ENCODE measurements at regions of chr9 and their contacts with region 1.

Region 1: GRCh38 chr9:136488247-136489214 is 5.7 kb upstream of the SEC16A start:
- DNase-seq: peak; percentile 50 to 87
- H3K4me3 ChIP-seq: no peak overlapping the region
- H3K27ac ChIP-seq: no peak overlapping the region
- H3K4me1 ChIP-seq: peaks cover 7% of the 10 kb centered on the region
- H3K27me3 ChIP-seq: no peaks in the 10 kb centered on the region
- CTCF ChIP-seq: peak; percentile 98

Region 2: DNA sequence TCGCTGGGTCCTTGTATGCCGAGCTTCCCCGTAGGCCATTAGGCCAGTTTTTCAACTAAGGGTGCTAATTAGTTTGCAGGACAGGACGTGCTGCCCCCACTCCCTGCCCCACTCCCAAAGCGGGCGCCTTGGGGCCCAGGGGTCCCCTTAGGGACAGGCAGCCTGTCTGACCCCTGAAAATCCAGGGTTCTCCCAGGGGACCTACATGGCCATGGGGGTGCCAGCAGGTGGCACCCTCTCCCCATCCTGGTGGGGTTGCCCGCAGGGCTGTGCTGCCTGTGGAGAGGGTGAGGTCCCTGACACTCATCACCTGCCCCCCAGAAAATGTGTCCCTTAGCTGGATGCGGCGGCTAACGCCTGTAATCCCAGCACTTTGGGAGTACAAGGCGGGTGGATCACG is 176.1 kb before region 1 on chr9:
- CTCF ChIA-PET with region 1: interaction called, 3 read pairs
- POLR2A ChIA-PET with region 1: no interaction called
- intact Hi-C with region 1: loop called (anchors 2 kb)
- DNase-seq: peak in 1 of 2 experiments; percentile 69
- H3K4me3 ChIP-seq: no peak overlapping the region
- H3K27ac ChIP-seq: no peak overlapping the region
- H3K4me1 ChIP-seq: peaks cover 10% of the 10 kb centered on the region
- H3K27me3 ChIP-seq: peaks cover 7% of the 10 kb centered on the region; the same call in 1 of the 2 replicates
- CTCF ChIP-seq: peak; percentile 77

Region 3: GRCh38 chr9:136403915-136404800 is 84.4 kb before region 1 on chr9:
- CTCF ChIA-PET with region 1: no interaction called
- POLR2A ChIA-PET with region 1: no interaction called
- intact Hi-C with region 1: no loop called
- DNase-seq: no peak
- H3K4me3 ChIP-seq: no peak overlapping the region
- H3K27ac ChIP-seq: no peak overlapping the region
- H3K4me1 ChIP-seq: peaks cover 11% of the 10 kb centered on the region
- H3K27me3 ChIP-seq: no peaks in the 10 kb centered on the region
- CTCF ChIP-seq: no peak

Region 4: GRCh38 chr9:136603901-136604816 is 115.6 kb after region 1 on chr9:
- CTCF ChIA-PET with region 1: no interaction called
- POLR2A ChIA-PET with region 1: interaction called, 10 read pairs
- intact Hi-C with region 1: no loop called
- DNase-seq: no peak
- H3K4me3 ChIP-seq: no peak overlapping the region
- H3K27ac ChIP-seq: no peak overlapping the region
- H3K4me1 ChIP-seq: 0 out of 2 replicates have a peak, but pooled peaks cover under 1% of the 10 kb centered on the region
- H3K27me3 ChIP-seq: peaks cover 18% of the 10 kb centered on the region
- CTCF ChIP-seq: no peak

Region 5: DNA sequence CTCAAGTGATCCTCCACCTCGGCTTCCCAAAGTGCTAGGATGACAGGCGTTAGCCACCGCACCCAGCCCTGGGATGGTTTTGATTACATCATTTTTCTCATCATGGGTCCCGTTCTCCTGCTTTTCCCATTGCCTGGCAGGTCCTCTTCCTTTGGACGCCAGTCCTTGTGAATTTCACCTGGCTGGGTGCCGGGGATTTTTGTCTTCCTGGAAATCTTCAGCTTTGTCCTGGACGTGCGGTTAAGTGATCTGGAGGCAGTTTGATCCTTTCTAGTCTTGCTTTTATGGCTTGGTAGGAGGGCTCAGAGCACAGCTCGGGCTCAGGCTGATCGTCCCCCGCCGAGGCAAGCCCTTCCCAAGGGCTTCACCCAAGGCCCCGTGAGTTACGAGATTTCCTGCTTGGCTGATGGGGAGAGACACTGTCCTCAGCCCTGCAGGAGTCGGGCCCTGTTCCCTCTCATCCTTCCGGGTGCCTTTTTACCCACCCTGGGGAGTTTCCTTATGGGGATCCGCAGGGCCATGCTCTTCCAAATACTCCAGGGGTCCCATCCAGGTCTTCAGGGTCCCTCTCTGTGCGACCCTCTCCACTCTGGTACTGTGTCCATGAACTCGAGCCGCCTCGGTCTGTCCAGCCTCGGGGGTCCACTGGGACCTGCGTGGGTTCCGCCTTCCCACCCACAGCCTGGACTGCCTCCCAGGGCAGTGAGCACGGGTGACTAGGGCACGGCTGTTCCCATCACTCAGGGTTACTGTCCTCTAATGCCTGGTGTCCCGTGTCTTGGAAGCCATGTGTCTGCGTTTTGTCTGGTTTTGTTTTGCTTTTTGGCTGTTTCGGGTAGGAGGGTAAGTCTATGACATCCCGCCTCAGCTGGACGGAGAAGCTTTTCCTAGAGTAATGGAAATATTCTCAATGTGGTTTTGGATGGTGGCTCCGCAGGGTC is 151.9 kb after region 1 on chr9:
- CTCF ChIA-PET with region 1: no interaction called
- POLR2A ChIA-PET with region 1: no interaction called
- intact Hi-C with region 1: no loop called
- DNase-seq: no peak
- H3K4me3 ChIP-seq: no peak overlapping the region
- H3K27ac ChIP-seq: no peak overlapping the region
- H3K4me1 ChIP-seq: peaks cover 16% of the 10 kb centered on the region
- H3K27me3 ChIP-seq: no peaks in the 10 kb centered on the region
- CTCF ChIP-seq: no peak

Region 6: DNA sequence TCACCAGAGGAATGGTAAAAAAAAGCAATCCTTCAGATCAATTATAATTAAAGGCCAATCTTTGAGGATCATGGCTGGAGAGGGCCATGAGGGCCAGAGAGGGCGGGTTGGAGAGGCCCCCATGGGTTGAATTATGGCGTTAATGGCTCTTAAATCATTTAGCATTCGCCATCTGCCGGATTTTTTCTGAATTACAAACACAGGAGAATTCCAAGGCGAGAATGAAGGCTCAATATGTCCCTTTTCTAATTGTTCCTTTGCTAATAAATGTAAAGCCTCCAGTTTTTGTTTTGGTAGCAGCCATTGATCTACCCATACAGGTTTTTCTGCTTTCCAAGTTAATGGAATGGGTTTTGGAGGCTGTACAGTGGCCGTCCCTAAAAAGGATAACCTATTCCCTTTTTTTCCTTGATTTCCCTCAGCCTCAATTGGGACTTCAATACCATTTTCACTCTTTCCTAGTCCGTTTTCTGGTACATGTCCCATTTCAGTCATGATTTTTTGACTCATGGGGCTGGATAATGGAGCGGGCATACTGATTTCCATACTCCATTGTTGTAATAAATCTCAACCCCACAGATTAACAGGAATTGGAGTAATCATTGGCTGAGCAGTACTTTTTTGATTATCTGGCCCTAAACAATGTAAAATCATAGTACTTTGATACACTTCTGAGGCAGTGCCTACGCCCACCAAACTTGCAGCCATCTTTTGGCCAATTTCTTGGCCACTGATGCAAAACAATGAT is 295.9 kb after region 1 on chr9:
- CTCF ChIA-PET with region 1: no interaction called
- POLR2A ChIA-PET with region 1: no interaction called
- intact Hi-C with region 1: no loop called
- DNase-seq: no peak
- H3K4me3 ChIP-seq: no peak overlapping the region
- H3K27ac ChIP-seq: no peak overlapping the region
- H3K4me1 ChIP-seq: no peaks in the 10 kb centered on the region
- H3K27me3 ChIP-seq: peaks cover 17% of the 10 kb centered on the region
- CTCF ChIP-seq: peak; percentile 74; the same call in 1 of the 2 replicates

Measured in PC-9 (cell line).